GM10248 (cell line): ENCODE measurements at regions of chr17 and their contacts with region 1.

Region 1: GRCh38 chr17:16428098-16428882 is 12.9 kb downstream of the TRPV2 start:
- DNase-seq: peak; percentile 67
- CTCF ChIP-seq: peak; percentile 40

Region 2: DNA sequence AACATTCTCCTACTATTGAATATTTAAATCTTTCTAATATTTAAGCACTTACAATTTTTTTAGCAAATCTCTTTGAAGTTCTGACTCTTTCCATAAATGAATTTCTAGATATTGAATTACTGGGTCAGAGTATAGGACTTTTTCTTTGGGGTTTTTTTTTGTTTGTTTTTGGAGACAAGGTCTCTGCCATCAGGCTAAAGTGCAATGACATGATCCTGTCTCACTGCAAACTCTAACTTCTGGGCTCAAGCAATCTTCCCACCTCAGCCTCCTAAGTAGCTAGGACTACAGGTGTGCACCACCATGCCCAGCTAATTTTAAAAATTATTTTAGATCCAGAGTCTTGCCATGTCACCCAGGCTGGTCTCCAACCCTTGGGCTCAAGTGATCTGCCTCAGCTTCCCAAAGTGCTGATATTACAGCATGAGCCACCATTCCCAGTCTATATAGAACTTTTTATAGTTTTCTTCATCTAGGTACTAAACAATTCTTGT is 186.3 kb before region 1 on chr17:
- CTCF ChIA-PET with region 1: no interaction called
- POLR2A ChIA-PET with region 1: no interaction called
- DNase-seq: no peak
- CTCF ChIP-seq: no peak

Region 3: GRCh38 chr17:16415031-16415924 is 13.0 kb before region 1 on chr17 and contains the start of gene TRPV2:
- CTCF ChIA-PET with region 1: interaction called, 44 read pairs
- POLR2A ChIA-PET with region 1: interaction called, 3 read pairs
- DNase-seq: peak; percentile 78
- CTCF ChIP-seq: peak; percentile 86